A549 (cell line): ENCODE measurements at regions of chr3 and their contacts with region 1.

Region 1: DNA sequence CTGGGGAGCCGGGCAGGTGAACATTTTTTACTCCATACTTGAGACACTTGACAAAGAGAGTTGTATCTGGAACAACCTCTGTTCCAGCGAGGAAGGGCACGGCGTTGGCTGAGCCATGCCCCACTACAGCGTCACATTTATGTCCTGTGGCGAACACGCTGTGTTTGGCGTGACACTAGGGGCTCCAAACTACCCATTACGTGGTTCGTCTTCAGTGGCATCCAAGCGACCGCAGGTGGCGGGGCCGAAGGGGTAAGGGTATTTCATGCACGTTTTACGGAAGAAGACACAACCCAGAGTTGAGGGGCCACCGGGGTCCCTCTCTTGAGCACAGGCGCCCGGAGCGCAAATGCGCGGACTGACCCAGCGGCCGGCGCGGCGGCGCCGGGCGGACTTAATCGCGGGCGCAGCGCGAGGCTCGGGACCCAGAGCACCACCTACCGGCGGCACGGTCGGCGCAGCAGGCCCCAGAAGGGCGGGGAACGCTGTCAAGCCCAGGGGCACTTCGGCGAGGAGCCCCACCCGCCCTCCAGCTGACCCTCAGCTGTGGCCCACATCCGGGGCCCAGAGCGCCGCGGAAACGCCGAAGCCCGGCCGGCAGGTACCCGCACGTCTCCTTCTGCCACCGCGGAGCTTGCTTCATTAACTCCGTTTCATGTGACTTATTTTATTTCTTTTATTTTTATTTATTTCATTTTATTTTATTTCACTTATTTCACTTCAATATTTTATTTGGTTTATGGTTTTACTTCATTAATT is 36.4 kb upstream of the TRIM71 start:
- DNase-seq: peak; percentile 73 to 89
- ATAC-seq: peak; percentile 93 to 97
- H3K4me3 ChIP-seq: peak overlapping the region; percentile 55
- H3K27ac ChIP-seq: peak overlapping the region; percentile 57 to 79
- H3K4me1 ChIP-seq: peaks cover 4% of the 10 kb centered on the region; the same call in 1 of the 3 replicates
- CTCF ChIP-seq: peak; percentile 78
- EP300 ChIP-seq: no peak
- POLR2A ChIP-seq: no peak
- RAD21 ChIP-seq: peak in 1 of 2 experiments; percentile 62; a peak in 3 of 5 replicates

Region 2: GRCh38 chr3:32226870-32227500 is 554.4 kb before region 1 on chr3:
- CTCF ChIA-PET with region 1: no interaction called
- POLR2A ChIA-PET with region 1: no interaction called
- DNase-seq: peak; percentile 22 to 23
- ATAC-seq: peak; percentile 86 to 88
- H3K4me3 ChIP-seq: no peak overlapping the region
- H3K27ac ChIP-seq: peak overlapping the region; percentile 70 to 77
- H3K4me1 ChIP-seq: peaks cover 13% of the 10 kb centered on the region
- CTCF ChIP-seq: no peak
- EP300 ChIP-seq: no peak
- POLR2A ChIP-seq: no peak
- RAD21 ChIP-seq: 0 out of 5 replicates have a peak, but pooled peaks of 1 of the 2 experiments have one; percentile 16

Region 3: GRCh38 chr3:32646761-32647160 is 134.6 kb before region 1 on chr3:
- CTCF ChIA-PET with region 1: no interaction called
- POLR2A ChIA-PET with region 1: no interaction called
- DNase-seq: no peak
- ATAC-seq: no peak
- H3K4me3 ChIP-seq: no peak overlapping the region
- H3K27ac ChIP-seq: no peak overlapping the region
- H3K4me1 ChIP-seq: no peaks in the 10 kb centered on the region
- CTCF ChIP-seq: no peak
- EP300 ChIP-seq: no peak
- POLR2A ChIP-seq: no peak
- RAD21 ChIP-seq: no peak

Region 4: GRCh38 chr3:32660634-32661033 is 120.8 kb before region 1 on chr3:
- CTCF ChIA-PET with region 1: no interaction called
- POLR2A ChIA-PET with region 1: no interaction called
- DNase-seq: no peak
- ATAC-seq: no peak
- H3K4me3 ChIP-seq: no peak overlapping the region
- H3K27ac ChIP-seq: no peak overlapping the region
- H3K4me1 ChIP-seq: no peaks in the 10 kb centered on the region
- CTCF ChIP-seq: no peak
- EP300 ChIP-seq: no peak
- POLR2A ChIP-seq: no peak
- RAD21 ChIP-seq: no peak

Region 5: GRCh38 chr3:32719335-32719734 is 62.1 kb before region 1 on chr3:
- CTCF ChIA-PET with region 1: no interaction called
- POLR2A ChIA-PET with region 1: no interaction called
- DNase-seq: no peak
- ATAC-seq: peak in 1 of 2 experiments; percentile 51; a peak in 1 of 6 replicates
- H3K4me3 ChIP-seq: no peak overlapping the region
- H3K27ac ChIP-seq: no peak overlapping the region
- H3K4me1 ChIP-seq: peaks cover 4% of the 10 kb centered on the region; the same call in 1 of the 3 replicates
- CTCF ChIP-seq: no peak
- EP300 ChIP-seq: no peak
- POLR2A ChIP-seq: no peak
- RAD21 ChIP-seq: no peak

Region 6: GRCh38 chr3:32733631-32734229 is 47.7 kb before region 1 on chr3:
- CTCF ChIA-PET with region 1: interaction called, 16 read pairs
- POLR2A ChIA-PET with region 1: no interaction called
- DNase-seq: peak; percentile 42 to 54
- ATAC-seq: peak in 1 of 2 experiments; percentile 75; a peak in 4 of 6 replicates
- H3K4me3 ChIP-seq: no peak overlapping the region
- H3K27ac ChIP-seq: no peak overlapping the region
- H3K4me1 ChIP-seq: no peaks in the 10 kb centered on the region
- CTCF ChIP-seq: peak; percentile 74
- EP300 ChIP-seq: no peak
- POLR2A ChIP-seq: no peak
- RAD21 ChIP-seq: peak; percentile 60 to 70; a peak in 4 of 5 replicates

Region 7: GRCh38 chr3:32901432-32902409 is 120.3 kb after region 1 on chr3:
- CTCF ChIA-PET with region 1: interaction called, 14 read pairs
- POLR2A ChIA-PET with region 1: no interaction called
- DNase-seq: peak in 1 of 2 experiments; percentile 59
- ATAC-seq: peak in 1 of 2 experiments; percentile 81; a peak in 3 of 6 replicates
- H3K4me3 ChIP-seq: no peak overlapping the region
- H3K27ac ChIP-seq: no peak overlapping the region
- H3K4me1 ChIP-seq: no peaks in the 10 kb centered on the region
- CTCF ChIP-seq: peak; percentile 53
- EP300 ChIP-seq: no peak
- POLR2A ChIP-seq: no peak
- RAD21 ChIP-seq: no peak